ENCODE measurements at regions of chr5 and their contacts with region 1.

Region 1: GRCh38 chr5:126594676-126595485 is at the start of gene ALDH7A1:
- DNase-seq: peak; percentile 95 to 97
- H3K4me3 ChIP-seq: peak within 1 kb of the TSS; percentile 21 to 74 (median 49)
- H3K27ac ChIP-seq: peak within 1 kb of the TSS; percentile 62 to 78 (median 63)
- H3K4me1 ChIP-seq: peaks cover 9 to 12% of the 10 kb centered on the region in 2 donors
- H3K27me3 ChIP-seq: no peaks in the 10 kb centered on the region
- CTCF ChIP-seq: peak; percentile 19 to 74 (median 58)
- POLR2A ChIP-seq: peak; percentile 24 to 87
- total RNA-seq, gene ALDH7A1: 25.3 to 57.3 (median 41.5) TPM

Region 2: GRCh38 chr5:126339215-126339805 is 255.6 kb before region 1 on chr5:
- intact Hi-C with region 1: loop called (anchors 5 kb)
- DNase-seq: peak; percentile 23 to 26
- H3K4me3 ChIP-seq: no peak overlapping the region
- H3K27ac ChIP-seq: no peak overlapping the region
- H3K4me1 ChIP-seq: no peaks in the 10 kb centered on the region
- H3K27me3 ChIP-seq: no peaks in the 10 kb centered on the region
- CTCF ChIP-seq: peak; percentile 56 to 85 (median 75)
- POLR2A ChIP-seq: no peak

Region 3: GRCh38 chr5:126846344-126846743 is 251.5 kb after region 1 on chr5:
- intact Hi-C with region 1: no loop called
- DNase-seq: no peak
- H3K4me3 ChIP-seq: no peak overlapping the region
- H3K27ac ChIP-seq: no peak overlapping the region
- H3K4me1 ChIP-seq: peaks cover 0 to 18% of the 10 kb centered on the region in 2 donors
- H3K27me3 ChIP-seq: no peaks in the 10 kb centered on the region
- CTCF ChIP-seq: no peak
- POLR2A ChIP-seq: no peak